Heart right ventricle (tissue), 16 donors: ENCODE measurements at regions of chr5 and their contacts with region 1.

Region 1: DNA sequence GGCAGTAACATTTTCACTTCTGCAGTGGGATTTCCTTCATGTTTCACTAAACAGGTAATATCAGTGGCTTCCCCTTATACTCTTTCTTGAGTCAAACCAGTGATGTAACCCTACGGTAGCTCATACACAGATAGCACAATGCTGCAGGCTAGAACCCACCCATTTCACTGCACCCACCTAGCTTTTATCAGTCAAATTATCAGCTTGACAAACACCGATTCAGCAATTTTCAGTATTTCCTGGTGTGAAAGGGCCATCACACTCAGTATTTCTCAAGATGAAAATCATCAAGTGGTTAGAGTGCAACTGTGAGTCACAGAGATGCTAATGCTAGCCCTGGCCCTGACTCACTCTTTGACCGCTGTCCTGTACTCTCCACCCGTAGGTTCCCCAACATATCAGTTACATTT is 242.3 kb upstream of the PTGER4 start:
- DNase-seq: no peak
- ATAC-seq: peak in 2 of 8 donors; percentile 33 to 41
- H3K4me3 ChIP-seq: no peak overlapping the region
- H3K27ac ChIP-seq: peak overlapping the region in 1 of 10 donors; percentile 61
- H3K4me1 ChIP-seq: peaks cover 0 to 28% (median 0%) of the 10 kb centered on the region in 9 donors
- H3K27me3 ChIP-seq: no peaks in the 10 kb centered on the region
- CTCF ChIP-seq: no peak

Region 2: GRCh38 chr5:40615586-40616170 is 178.2 kb after region 1 on chr5:
- intact Hi-C with region 1: loop called in 1 of 10 experiments (anchors 10 kb)
- DNase-seq: no peak
- ATAC-seq: peak in 6 of 8 donors; percentile 33 to 62 (median 54)
- H3K4me3 ChIP-seq: peak overlapping the region in 1 of 10 donors; percentile 6
- H3K27ac ChIP-seq: peak overlapping the region in 6 of 10 donors; percentile 6 to 72 (median 32)
- H3K4me1 ChIP-seq: peaks cover 0 to 26% (median 0%) of the 10 kb centered on the region in 9 donors
- H3K27me3 ChIP-seq: no peaks in the 10 kb centered on the region
- CTCF ChIP-seq: no peak